ENCODE measurements at regions of chr5 and their contacts with region 1.

Region 1: DNA sequence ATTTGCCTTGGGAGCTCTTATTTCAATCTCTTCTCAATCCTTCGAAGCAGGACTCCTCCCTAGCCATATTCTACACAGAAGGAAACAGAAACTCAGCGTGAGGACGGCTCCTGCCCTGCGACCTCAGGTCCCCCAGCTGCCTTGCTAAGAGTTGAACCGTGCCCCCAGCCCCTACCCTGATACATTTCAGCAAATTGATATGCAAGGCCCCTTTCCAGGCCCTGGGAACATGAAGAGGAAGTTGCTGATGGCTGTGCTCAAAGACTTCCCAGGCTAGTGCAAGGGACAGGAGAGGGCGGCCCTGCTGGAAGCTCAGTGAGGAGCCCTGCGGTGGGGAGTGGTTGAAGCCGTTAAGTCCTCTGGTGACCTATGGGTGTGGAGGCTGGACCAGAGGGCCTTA is 41.5 kb downstream of the BOD1 start:
- DNase-seq: no peak
- ATAC-seq: no peak
- H3K4me3 ChIP-seq: no peak overlapping the region
- H3K27ac ChIP-seq: no peak overlapping the region
- H3K4me1 ChIP-seq: peaks cover 7% of the 10 kb centered on the region
- H3K27me3 ChIP-seq: no peaks in the 10 kb centered on the region
- CTCF ChIP-seq: no peak
- POLR2A ChIP-seq: no peak

Region 2: GRCh38 chr5:173293817-173294672 is 280.9 kb before region 1 on chr5:
- intact Hi-C with region 1: loop called (anchors 5 kb)
- DNase-seq: peak; percentile 77 to 81 (median 79)
- ATAC-seq: peak; percentile 58
- H3K4me3 ChIP-seq: no peak overlapping the region
- H3K27ac ChIP-seq: no peak overlapping the region
- H3K4me1 ChIP-seq: peaks cover 29% of the 10 kb centered on the region
- H3K27me3 ChIP-seq: no peaks in the 10 kb centered on the region
- CTCF ChIP-seq: peak; percentile 71 to 93 (median 91)
- POLR2A ChIP-seq: no peak

Measured in body of pancreas (tissue), 4 donors.